ENCODE measurements at regions of chr6 and their contacts with region 1.

Region 1: GRCh38 chr6:129490521-129491245 is 219.3 kb downstream of the ARHGAP18 start:
- DNase-seq: no peak

Region 2: GRCh38 chr6:129575378-129576118 is 84.9 kb after region 1 on chr6:
- CTCF ChIA-PET with region 1: interaction called, 10 read pairs
- POLR2A ChIA-PET with region 1: no interaction called
- DNase-seq: peak; percentile 66

Region 3: DNA sequence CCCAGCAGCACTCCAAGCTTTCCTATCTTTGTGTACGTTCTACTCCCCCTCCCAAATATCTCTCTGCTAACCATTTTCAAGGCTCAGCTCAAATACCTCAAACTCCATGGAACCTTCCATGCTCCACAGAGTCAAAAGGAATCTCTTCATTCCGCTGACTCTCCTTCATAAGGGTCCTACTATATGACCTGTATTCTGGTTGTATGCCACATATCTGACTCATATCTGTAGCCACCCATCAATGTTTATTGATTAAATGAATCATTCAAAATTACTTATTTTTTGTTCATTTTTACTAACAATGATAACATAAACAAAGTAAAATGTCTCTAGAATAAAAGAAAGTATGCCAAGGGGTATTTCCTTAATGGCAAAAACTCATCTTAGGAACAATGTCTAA is 96.1 kb after region 1 on chr6:
- CTCF ChIA-PET with region 1: no interaction called
- POLR2A ChIA-PET with region 1: no interaction called
- DNase-seq: no peak

Measured in HEK293T (cell line).